ENCODE measurements at regions of chr4 and their contacts with region 1.

Region 1: GRCh38 chr4:113673450-113673849 is 88.1 kb downstream of the CAMK2D start:
- DNase-seq: peak; percentile 24
- H3K4me3 Mint-ChIP-seq: no peak overlapping the region
- H3K27ac Mint-ChIP-seq: no peak overlapping the region
- H3K4me1 Mint-ChIP-seq: peaks cover 45% of the 10 kb centered on the region
- H3K27me3 Mint-ChIP-seq: no peaks in the 10 kb centered on the region

Region 2: GRCh38 chr4:113411496-113411938 is 261.9 kb before region 1 on chr4:
- CTCF ChIA-PET with region 1: no interaction called
- DNase-seq: no peak
- H3K4me3 Mint-ChIP-seq: no peak overlapping the region
- H3K27ac Mint-ChIP-seq: no peak overlapping the region
- H3K4me1 Mint-ChIP-seq: peaks cover 4% of the 10 kb centered on the region
- H3K27me3 Mint-ChIP-seq: peaks cover 4% of the 10 kb centered on the region

Region 3: DNA sequence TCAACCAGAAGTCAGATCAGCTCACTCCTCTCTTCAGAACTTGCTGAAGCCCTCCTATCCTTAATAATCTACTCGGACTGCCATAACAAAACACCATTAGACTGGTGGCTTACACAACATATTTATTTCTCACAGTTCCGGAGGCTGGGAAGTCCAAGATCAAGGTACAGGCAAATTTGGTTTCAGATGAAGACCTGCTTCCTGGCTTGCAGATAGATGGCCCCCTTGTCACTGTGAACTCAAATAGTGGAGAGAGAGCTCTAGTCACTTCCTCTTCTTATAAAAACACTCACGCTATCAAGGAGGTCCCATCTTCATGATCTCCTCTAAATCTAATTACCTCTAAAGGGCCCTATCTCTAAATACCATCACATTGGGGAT is 37.0 kb before region 1 on chr4:
- CTCF ChIA-PET with region 1: interaction called, 14 read pairs
- DNase-seq: peak; percentile 27
- H3K4me3 Mint-ChIP-seq: peak overlapping the region; percentile 33
- H3K27ac Mint-ChIP-seq: peak overlapping the region; percentile 86
- H3K4me1 Mint-ChIP-seq: peaks cover 50% of the 10 kb centered on the region
- H3K27me3 Mint-ChIP-seq: no peaks in the 10 kb centered on the region

Measured in activated naive CD4-positive, alpha-beta T cell treated with anti-CD3 and anti-CD28 coated beads, Interleukin-2, amount 10 ng/mL, durations not matched to agents 7 days and 5 days (primary cell).